Activated B cell treated with CpG ODN at 0.5 μM for 24 hours (primary cell): ENCODE measurements at regions of chr5 and their contacts with region 1.

Region 1: GRCh38 chr5:157731272-157732129 is at the start of gene THG1L:
- DNase-seq: peak; percentile 93
- ATAC-seq: peak; percentile 84
- H3K4me3 Mint-ChIP-seq: peak within 1 kb of the TSS; percentile 98
- H3K27ac Mint-ChIP-seq: peak within 1 kb of the TSS; percentile 99
- H3K4me1 Mint-ChIP-seq: peaks cover 46% of the 10 kb centered on the region
- H3K27me3 Mint-ChIP-seq: no peaks in the 10 kb centered on the region
- CTCF ChIP-seq: no peak
- total RNA-seq, gene THG1L: 25.6 and 28.9 TPM in 2 replicates

Region 2: GRCh38 chr5:157180374-157181264 is 550.9 kb before region 1 on chr5 and contains the start of gene ITK:
- CTCF ChIA-PET with region 1: no interaction called
- POLR2A ChIA-PET with region 1: no interaction called
- intact Hi-C with region 1: no loop called
- DNase-seq: no peak
- ATAC-seq: no peak
- H3K4me3 Mint-ChIP-seq: no peak within 1 kb of the TSS
- H3K27ac Mint-ChIP-seq: no peak within 1 kb of the TSS
- H3K4me1 Mint-ChIP-seq: no peaks in the 10 kb centered on the region
- H3K27me3 Mint-ChIP-seq: no peaks in the 10 kb centered on the region
- CTCF ChIP-seq: no peak
- total RNA-seq, gene ITK: 0.18 and 0.86 TPM in 2 replicates

Region 3: DNA sequence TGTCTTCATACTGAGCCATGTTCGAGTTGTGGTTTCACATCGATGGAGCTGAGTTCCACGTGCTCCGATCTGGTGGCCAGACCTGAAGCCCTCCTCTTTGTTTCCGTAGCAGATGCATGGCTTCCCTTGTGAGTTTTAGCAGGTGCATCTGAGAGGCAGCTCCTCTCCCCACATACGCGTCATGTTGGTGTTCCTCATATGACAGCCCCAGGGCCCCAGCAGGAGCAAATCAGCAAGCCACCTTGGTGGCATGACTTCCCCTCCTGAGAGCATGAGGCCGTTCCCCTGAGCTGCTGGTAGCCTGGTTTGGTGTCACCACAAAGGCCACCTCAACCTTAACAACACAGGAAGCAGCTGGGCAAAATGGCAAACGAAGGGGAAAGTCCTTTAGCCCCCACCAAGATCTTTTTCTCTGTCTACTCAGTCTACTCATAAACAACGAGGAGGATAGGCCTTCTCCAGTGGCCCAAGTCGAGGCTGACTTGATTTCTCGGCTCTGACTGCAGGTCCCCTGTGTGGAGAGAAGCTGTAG is 459.7 kb before region 1 on chr5:
- CTCF ChIA-PET with region 1: no interaction called
- POLR2A ChIA-PET with region 1: interaction called, 3 read pairs
- intact Hi-C with region 1: loop called (anchors 2 kb)
- DNase-seq: peak; percentile 74
- ATAC-seq: peak; percentile 86
- H3K4me3 Mint-ChIP-seq: peak overlapping the region; percentile 73
- H3K27ac Mint-ChIP-seq: peak overlapping the region; percentile 99
- H3K4me1 Mint-ChIP-seq: peaks cover 93% of the 10 kb centered on the region
- H3K27me3 Mint-ChIP-seq: no peaks in the 10 kb centered on the region
- CTCF ChIP-seq: no peak

Region 4: DNA sequence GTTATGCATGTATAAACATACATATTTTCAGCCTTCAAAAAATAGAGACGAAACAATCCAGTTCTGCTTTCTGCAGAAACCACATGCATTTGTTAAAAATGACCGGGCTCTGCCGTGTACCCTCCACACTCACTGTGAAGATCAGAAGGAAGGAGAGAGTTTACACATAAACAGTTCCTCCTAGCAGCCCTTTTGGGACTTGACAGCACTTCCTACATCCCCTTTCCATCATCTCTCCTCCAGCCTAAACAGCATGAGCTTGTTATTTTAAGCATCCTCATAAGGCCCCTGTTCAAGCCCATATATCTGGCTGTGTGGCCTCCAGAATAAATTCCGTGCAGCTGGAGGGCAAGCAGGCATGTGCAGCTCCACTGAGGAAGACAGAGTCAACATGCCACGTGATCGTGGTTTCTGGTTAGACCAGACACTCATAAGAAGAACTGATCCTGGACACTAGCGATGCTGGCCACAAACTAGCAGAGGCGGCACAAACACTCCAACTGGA is 229.3 kb before region 1 on chr5:
- CTCF ChIA-PET with region 1: no interaction called
- POLR2A ChIA-PET with region 1: interaction called, 3 read pairs
- intact Hi-C with region 1: loop called (anchors 2 kb)
- DNase-seq: no peak
- ATAC-seq: peak; percentile 73
- H3K4me3 Mint-ChIP-seq: peak overlapping the region; percentile 65
- H3K27ac Mint-ChIP-seq: peak overlapping the region; percentile 93
- H3K4me1 Mint-ChIP-seq: peaks cover 88% of the 10 kb centered on the region
- H3K27me3 Mint-ChIP-seq: no peaks in the 10 kb centered on the region
- CTCF ChIP-seq: no peak

Region 5: DNA sequence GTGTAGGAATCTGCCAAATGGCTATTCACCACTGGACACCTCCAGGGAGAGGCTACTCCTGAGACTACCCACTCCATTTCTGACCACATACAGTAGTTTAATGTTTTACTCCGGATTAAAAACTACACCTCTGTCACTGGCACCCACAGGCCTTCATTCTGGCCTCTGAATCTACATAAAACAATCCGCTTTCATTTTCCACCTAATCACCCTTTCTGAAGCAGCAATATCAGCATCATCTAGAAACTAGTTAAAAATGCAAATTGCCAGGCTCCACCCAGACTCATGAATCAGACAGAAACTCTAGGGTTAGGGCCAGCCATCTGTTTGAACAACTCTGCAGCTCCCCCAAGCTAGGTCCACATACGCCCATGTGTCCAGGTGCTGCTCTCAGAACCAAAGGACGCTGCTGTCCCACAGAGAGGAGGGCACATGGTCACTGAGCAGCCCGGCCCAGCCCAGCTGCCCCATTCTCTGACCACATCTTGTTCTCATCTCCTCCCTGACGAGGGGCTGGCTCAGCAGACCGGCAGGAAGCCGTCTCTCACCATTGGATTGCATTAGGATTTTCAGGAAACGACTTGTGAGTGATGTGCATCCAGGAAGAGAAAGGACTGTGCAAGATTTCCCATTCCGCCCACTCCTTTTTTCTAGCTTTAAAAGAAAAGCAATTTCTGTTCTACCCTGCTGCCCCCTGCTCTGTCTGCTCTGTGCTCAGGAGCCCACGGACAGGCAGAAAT is 190.6 kb before region 1 on chr5:
- CTCF ChIA-PET with region 1: no interaction called
- POLR2A ChIA-PET with region 1: no interaction called
- intact Hi-C with region 1: loop called (anchors 1 kb)
- DNase-seq: peak; percentile 37
- ATAC-seq: peak; percentile 91
- H3K4me3 Mint-ChIP-seq: peak overlapping the region; percentile 60
- H3K27ac Mint-ChIP-seq: peak overlapping the region; percentile 92
- H3K4me1 Mint-ChIP-seq: peaks cover 86% of the 10 kb centered on the region
- H3K27me3 Mint-ChIP-seq: no peaks in the 10 kb centered on the region
- CTCF ChIP-seq: no peak